ENCODE measurements at regions of chr7 and their contacts with region 1.

Region 1: GRCh38 chr7:43925984-43926797 is at the start of gene UBE2D4:
- DNase-seq: peak; percentile 94
- ATAC-seq: peak; percentile 92
- H3K4me3 Mint-ChIP-seq: peak within 1 kb of the TSS; percentile 91
- H3K27ac Mint-ChIP-seq: peak within 1 kb of the TSS; percentile 98
- H3K4me1 Mint-ChIP-seq: peaks cover 29% of the 10 kb centered on the region
- H3K27me3 Mint-ChIP-seq: no peaks in the 10 kb centered on the region
- total RNA-seq, gene UBE2D4: 10.1 to 10.7 TPM

Region 2: GRCh38 chr7:43869006-43869866 is 57.0 kb before region 1 on chr7 and contains the start of gene MRPS24:
- CTCF ChIA-PET with region 1: no interaction called
- POLR2A ChIA-PET with region 1: no interaction called
- intact Hi-C with region 1: loop called (anchors 1 to 2 kb)
- DNase-seq: peak; percentile 98
- ATAC-seq: peak; percentile 96
- H3K4me3 Mint-ChIP-seq: peak within 1 kb of the TSS; percentile 83
- H3K27ac Mint-ChIP-seq: peak within 1 kb of the TSS; percentile 84
- H3K4me1 Mint-ChIP-seq: peaks cover 35% of the 10 kb centered on the region
- H3K27me3 Mint-ChIP-seq: no peaks in the 10 kb centered on the region
- total RNA-seq, gene MRPS24: 121 to 149 TPM

Region 3: DNA sequence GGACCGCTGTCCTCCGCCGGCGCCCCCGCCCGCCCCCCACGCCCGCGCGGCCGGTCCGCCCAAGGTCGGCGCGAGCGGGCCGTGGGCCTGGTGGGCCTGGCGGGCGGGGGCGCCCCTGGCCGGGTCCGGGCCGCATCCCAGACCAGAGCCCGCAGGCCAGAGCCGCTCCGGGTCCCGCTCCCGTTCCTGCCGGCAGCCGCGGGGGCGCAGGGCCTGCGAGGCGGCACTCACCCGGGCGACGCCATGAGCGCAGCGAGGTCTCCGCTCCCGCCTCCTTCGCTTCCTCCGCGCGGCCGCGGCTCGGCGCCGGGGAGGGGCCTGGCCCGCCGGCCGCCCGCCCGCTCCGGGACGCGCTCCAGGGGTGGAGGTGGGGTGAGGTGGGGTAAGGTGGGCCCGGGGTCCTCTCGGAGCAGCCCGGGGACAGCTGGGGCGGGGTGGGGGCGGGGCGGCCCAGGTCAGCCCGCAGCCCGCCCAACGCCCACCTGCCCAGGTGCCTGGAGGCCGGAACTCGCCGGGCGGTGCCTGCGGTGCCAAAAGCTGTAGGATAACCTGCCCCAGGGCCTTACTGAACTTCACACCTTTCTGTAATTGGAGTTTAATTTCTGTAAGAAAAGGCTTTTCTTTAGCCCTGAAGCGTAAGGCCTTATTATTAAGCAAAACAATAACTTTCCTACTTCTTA is 19.7 kb before region 1 on chr7 and contains the start of gene URGCP:
- CTCF ChIA-PET with region 1: interaction called, 3 read pairs
- POLR2A ChIA-PET with region 1: interaction called, 11 read pairs
- intact Hi-C with region 1: loop called in 1 of 2 experiments (anchors 1 kb)
- DNase-seq: peak; percentile 73
- ATAC-seq: peak; percentile 81
- H3K4me3 Mint-ChIP-seq: peak within 1 kb of the TSS; percentile 89
- H3K27ac Mint-ChIP-seq: peak within 1 kb of the TSS; percentile 96
- H3K4me1 Mint-ChIP-seq: peaks cover 33% of the 10 kb centered on the region
- H3K27me3 Mint-ChIP-seq: no peaks in the 10 kb centered on the region
- total RNA-seq, gene URGCP: 22.2 to 23.0 TPM

Region 4: DNA sequence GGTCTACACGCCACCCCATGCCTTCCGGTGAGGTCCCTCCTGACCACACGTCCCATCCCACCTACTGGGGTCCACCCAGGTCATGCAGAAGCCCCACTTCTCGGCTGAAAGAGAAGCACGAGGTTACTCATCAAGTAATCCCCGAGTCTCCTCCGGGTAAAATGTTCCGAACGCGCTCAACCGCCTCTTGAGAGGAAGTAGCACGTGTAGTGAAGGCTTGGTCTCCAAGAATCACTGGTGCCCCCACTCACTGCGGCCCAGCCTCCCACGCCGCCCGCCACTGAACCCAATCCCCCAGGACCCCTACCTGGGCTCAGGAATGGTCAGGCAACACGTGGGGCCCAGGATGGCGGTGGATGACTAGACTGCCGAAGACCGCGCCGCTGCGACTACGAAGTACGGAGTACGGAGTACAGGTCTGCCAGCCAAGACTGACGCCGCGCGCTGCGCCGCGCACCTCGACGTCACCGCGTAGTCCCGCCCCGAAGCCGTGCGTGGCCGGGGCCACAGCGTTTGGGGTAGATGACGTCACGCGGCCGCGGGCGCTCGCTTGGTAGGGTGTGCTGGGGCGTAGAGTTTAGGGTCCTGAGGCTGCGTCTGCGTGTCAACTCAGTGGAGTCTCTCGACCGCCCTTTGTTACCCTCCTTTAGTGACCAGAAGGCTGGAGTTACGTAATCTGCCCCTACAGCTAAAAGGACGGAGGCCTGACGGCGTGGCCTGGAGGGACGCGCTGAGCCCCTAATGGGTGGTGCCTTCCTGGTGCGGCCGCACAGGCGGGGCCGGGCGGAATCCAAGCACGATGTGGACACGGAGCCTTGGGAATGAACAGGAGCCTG is 1060.2 kb after region 1 on chr7:
- CTCF ChIA-PET with region 1: no interaction called
- POLR2A ChIA-PET with region 1: no interaction called
- intact Hi-C with region 1: loop called in 1 of 2 experiments (anchors 5 kb)
- DNase-seq: peak; percentile 99
- ATAC-seq: peak; percentile 90
- H3K4me3 Mint-ChIP-seq: peak overlapping the region; percentile 99
- H3K27ac Mint-ChIP-seq: peak overlapping the region; percentile 99
- H3K4me1 Mint-ChIP-seq: peaks cover 52% of the 10 kb centered on the region
- H3K27me3 Mint-ChIP-seq: no peaks in the 10 kb centered on the region

Measured in activated CD4-positive, alpha-beta T cell treated with anti-CD3 and anti-CD28 coated beads for 36 hours (primary cell).